ENCODE measurements at regions of chr16 and their contacts with region 1.

Region 1: GRCh38 chr16:4339909-4340308 is 11.2 kb downstream of the PAM16 start:
- DNase-seq: peak; percentile 69 to 83 (median 81)
- H3K4me3 ChIP-seq: no peak overlapping the region
- H3K27ac ChIP-seq: peak overlapping the region in 1 of 2 donors; percentile 44
- H3K4me1 ChIP-seq: peaks cover 4% of the 10 kb centered on the region
- H3K27me3 ChIP-seq: no peaks in the 10 kb centered on the region
- CTCF ChIP-seq: no peak
- EP300 ChIP-seq: no peak
- POLR2A ChIP-seq: no peak

Region 2: DNA sequence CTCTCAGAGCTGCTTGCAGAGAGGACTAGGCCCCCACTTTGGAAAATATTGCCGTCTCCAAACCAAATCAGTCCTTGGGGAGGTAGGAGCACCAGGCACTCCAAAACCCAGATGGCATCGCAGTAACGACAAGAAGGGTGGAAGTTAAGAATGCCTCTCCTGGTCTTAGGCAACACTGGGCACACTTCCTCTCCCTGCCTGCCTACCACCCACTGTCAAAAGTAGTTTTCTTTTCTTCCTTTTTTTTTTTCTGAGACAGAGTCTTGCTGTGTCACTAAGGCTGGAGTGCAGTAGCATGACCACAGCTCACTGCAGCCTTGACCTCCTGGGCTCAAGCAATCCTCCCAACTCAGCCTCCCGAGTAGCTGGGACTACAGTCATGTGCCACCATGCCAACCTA is 145.2 kb before region 1 on chr16:
- intact Hi-C with region 1: loop called in 1 of 4 experiments (anchors 5 kb)
- DNase-seq: no peak
- H3K4me3 ChIP-seq: no peak overlapping the region
- H3K27ac ChIP-seq: no peak overlapping the region
- H3K4me1 ChIP-seq: no peaks in the 10 kb centered on the region
- H3K27me3 ChIP-seq: no peaks in the 10 kb centered on the region
- CTCF ChIP-seq: no peak
- EP300 ChIP-seq: no peak
- POLR2A ChIP-seq: no peak

Measured in ovary (tissue), 10 donors.